Testis (tissue), 5 donors: ENCODE measurements at regions of chr11 and their contacts with region 1.

Region 1: DNA sequence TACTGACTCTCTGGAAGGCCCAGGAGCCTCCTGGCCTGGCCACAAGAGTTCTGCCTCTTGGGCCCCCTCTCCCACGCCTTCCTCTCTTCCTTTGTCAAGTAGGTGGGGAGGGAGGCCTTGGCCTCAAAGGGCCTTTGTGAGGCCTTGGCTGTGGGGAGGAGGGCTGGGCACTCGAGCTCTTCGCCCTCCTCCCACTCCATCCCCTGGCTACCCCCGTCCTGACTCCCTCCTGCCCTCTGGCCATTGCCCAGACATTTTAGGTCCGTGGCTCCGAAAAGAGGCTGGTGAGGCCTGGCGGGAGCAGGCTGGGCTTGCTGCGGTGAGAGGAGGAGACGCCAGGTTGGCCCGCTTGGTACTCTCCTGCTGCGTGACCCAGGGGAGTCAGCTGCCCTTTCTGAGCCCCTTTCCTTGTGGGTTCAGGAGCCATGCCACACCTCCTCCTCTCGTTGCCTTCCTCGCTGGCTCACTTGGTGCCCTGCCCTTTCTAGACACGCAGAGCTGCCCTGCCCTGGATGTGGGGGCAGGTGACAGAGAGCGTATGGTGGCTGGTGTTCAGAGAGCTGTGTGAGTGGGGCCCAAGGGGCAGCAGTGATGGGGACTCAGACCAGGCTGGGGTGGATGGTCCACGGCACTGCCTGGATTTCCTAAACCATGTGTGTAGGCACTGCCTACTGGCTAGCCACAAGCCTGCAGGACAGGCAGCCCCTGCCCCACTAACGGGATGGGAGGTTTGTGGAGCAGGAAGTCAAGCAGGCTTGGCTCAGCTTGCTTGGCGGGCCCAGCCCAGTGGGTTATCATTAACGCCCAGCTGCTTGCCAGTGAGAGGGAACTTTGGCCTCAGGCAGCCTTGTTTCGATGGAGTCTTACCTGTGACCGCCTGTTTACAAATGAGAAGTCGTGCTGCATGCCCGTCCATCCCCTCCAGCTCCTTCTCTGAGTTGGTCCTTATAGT is 15.8 kb upstream of the OMP start:
- DNase-seq: peak; percentile 81
- H3K4me3 ChIP-seq: no peak overlapping the region
- H3K27ac ChIP-seq: peak overlapping the region; percentile 53 to 57
- H3K4me1 ChIP-seq: peaks cover 73% of the 10 kb centered on the region
- H3K27me3 ChIP-seq: no peaks in the 10 kb centered on the region
- CTCF ChIP-seq: no peak
- POLR2A ChIP-seq: no peak

Region 2: GRCh38 chr11:77047007-77047927 is 39.5 kb before region 1 on chr11:
- intact Hi-C with region 1: loop called (anchors 5 kb)
- DNase-seq: peak; percentile 93
- H3K4me3 ChIP-seq: no peak overlapping the region
- H3K27ac ChIP-seq: no peak overlapping the region
- H3K4me1 ChIP-seq: no peaks in the 10 kb centered on the region
- H3K27me3 ChIP-seq: no peaks in the 10 kb centered on the region
- CTCF ChIP-seq: peak; percentile 71 to 93 (median 78)
- POLR2A ChIP-seq: no peak

Region 3: DNA sequence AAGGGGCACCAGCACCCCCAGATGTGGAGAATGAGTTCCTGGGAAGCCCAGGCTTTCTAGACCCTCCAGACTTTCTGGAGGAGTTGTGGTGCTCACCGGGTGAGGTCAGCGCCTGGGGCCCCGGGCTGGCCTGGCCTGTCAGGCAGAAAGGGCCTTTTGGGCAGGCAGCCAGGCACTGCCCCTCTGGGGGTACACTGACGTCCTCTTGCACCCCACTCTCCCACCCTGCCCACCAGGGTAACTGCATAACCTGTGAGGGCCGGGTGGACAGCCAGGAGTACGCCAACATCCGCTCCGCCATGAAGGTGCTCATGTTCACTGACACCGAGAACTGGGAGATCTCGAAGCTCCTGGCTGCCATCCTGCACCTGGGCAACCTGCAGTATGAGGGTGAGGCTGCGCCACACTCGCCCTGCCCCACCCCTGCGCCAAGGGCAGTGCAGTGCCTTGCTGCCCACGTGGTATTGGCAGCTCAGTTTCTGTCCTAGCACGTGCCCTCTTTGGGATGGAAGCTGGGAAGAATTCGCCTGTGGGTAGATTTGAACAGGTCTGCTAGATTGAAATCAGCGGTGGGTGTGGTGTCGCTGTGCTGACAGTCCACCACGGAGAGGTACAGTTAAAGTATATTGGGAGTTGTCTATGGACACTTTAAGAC is 71.4 kb after region 1 on chr11:
- intact Hi-C with region 1: no loop called
- DNase-seq: no peak
- H3K4me3 ChIP-seq: no peak overlapping the region
- H3K27ac ChIP-seq: no peak overlapping the region
- H3K4me1 ChIP-seq: peaks cover 19% of the 10 kb centered on the region
- H3K27me3 ChIP-seq: no peaks in the 10 kb centered on the region
- CTCF ChIP-seq: no peak
- POLR2A ChIP-seq: no peak

Region 4: GRCh38 chr11:77198440-77198849 is 111.6 kb after region 1 on chr11:
- intact Hi-C with region 1: no loop called
- DNase-seq: no peak
- H3K4me3 ChIP-seq: no peak overlapping the region
- H3K27ac ChIP-seq: no peak overlapping the region
- H3K4me1 ChIP-seq: peaks cover 10% of the 10 kb centered on the region
- H3K27me3 ChIP-seq: no peaks in the 10 kb centered on the region
- CTCF ChIP-seq: no peak
- POLR2A ChIP-seq: no peak